HEK293 (cell line): ENCODE measurements at regions of chr4 and their contacts with region 1.

Region 1: DNA sequence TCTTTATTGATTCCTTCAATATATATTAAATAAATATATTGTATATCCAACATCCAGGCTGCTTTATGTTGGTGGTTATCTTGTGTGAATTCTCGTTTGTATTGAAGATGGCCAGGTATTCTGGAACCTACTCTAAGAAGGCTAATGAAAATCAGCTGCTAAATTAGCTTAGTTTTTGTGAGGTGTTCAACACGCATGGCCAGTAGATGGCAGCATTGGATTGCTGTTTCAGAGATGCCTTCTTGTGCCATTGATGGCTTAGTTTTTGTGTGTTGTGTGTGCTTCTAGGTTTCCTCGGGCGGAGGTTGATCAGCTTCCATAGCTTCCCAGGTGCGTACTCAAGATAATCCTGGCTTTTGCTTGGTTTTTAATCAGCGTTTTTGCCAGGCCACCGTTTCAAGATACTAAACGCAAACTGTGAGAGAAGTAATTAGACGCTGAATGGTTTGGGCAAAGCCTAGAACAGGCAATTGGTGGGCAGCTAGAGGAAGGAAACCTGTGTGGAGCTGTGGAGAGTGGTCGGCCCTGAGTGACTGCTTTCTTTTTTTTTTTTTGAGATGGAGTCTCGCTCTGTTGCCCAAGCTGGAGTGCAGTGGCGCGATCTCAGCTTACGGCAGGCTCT is 15.1 kb downstream of the NOCT start:
- H3K4me3 ChIP-seq: no peak overlapping the region
- H3K27ac ChIP-seq: no peak overlapping the region
- H3K4me1 ChIP-seq: no peaks in the 10 kb centered on the region
- CTCF ChIP-seq: peak; percentile 46; the same call in 1 of the 2 replicates

Region 2: DNA sequence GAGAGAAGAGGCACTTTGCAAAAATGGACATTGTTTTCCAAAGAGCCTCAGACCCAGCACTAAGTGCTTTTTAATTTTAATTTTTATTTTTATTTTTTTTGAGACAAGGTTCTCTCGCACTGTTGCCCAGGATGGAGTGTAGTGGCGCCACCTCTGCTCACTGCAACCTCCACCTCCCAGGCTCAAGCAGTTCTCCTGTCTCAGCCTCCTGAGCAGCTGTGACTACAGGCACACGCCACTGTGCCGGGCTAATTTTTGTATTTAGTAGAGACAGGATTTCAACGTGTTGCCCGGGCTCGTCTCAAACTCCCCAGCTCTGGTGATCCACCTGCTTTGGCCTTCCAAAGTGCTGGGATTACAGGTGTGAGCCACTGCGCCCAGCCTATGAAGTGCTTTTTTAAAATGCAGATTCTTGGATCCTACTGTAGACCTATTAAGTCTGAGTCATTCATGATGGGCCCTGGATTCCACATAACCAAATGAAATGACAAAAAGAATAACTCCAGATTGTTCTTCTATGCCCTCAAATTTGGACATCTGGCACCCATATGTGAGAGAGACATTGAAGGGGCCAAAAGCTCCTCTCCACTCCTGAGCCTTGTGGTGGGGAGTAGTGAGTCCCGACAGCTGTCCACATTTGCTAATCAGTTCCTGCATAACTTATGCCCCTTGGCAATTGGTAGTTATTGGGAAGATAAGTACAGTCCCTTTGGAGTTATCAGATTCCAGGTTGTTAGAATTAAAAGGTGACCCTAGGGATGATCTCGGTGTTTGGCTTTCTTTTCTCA is 11.6 kb before region 1 on chr4:
- CTCF ChIA-PET with region 1: interaction called, 28 read pairs
- POLR2A ChIA-PET with region 1: interaction called, 6 read pairs
- H3K4me3 ChIP-seq: no peak overlapping the region
- H3K27ac ChIP-seq: no peak overlapping the region
- H3K4me1 ChIP-seq: peaks cover 12% of the 10 kb centered on the region
- CTCF ChIP-seq: no peak

Region 3: DNA sequence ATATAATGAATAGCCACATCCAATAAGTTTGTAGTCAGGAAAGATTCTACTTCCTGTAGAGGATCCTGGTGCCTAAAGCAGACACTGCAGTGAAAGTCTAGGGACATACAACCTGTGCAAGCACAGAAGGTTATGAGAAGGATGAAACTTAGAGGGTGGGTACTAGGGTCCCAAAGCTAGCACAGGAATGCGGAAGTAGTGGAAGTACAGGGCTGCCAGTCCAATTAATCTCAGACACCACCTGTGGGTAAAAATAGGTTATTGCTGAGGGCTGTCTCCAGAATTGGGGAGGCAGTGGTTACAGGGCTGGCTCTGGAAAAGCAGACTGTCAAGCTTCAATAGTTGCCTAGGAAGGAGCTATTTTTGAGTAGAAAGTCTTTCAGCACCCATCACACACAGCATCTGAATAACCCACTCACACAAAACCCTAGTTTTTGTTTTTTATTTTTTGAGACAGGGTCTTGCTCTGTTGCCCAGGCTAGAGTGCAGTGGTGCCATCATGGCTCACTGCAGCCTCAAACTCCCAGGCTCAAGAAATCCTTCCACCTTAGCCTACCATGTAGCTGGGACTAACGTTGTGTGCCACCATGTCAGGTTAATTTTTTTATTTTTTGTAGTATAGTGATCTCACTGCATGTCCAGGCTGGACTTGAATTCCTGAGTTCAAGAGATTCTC is 197.1 kb after region 1 on chr4:
- CTCF ChIA-PET with region 1: interaction called, 13 read pairs
- POLR2A ChIA-PET with region 1: no interaction called
- H3K4me3 ChIP-seq: no peak overlapping the region
- H3K27ac ChIP-seq: no peak overlapping the region
- H3K4me1 ChIP-seq: no peaks in the 10 kb centered on the region
- CTCF ChIP-seq: no peak

Region 4: DNA sequence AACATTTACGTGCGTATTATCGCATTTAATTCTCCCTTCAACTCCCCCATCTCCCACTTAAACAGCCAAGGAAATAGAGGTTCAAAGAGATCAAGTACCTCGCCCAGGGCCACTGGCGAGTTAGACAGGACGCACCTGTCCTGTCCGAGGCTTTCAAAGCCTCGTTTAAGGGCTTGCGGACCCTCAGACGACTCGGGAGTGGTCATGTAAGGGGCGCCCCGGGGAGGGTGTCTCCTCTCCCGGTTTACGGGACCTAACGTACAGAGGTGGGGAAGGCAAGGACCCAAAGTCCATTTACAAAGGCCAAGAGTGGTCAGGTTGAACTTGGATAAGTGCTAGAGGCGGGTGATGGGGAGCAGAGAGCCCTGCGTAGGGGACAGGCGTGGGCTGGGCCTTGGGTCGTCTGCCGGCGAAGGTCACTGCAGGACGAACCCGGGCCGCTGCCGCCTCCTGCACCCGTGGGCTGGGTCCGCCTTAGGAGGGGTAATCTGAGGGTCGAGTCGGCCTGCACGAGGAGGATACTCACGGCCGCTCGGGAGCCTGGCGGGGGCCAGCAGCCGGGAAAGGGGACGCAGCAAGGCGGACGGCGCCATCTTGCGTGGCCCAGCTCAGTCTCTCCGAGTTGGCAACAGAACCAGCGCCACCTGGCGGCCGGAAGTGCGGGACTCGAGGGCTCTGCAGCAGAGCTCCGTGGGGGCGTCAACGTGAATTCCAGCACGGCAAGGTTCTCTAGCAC is 264.6 kb after region 1 on chr4:
- CTCF ChIA-PET with region 1: interaction called, 16 read pairs
- POLR2A ChIA-PET with region 1: no interaction called
- H3K4me3 ChIP-seq: peak overlapping the region; percentile 86
- H3K27ac ChIP-seq: peak overlapping the region; percentile 71
- H3K4me1 ChIP-seq: no peaks in the 10 kb centered on the region
- CTCF ChIP-seq: peak; percentile 97